K562 (cell line): ENCODE measurements at regions of chr17 and their contacts with region 1.

Region 1: DNA sequence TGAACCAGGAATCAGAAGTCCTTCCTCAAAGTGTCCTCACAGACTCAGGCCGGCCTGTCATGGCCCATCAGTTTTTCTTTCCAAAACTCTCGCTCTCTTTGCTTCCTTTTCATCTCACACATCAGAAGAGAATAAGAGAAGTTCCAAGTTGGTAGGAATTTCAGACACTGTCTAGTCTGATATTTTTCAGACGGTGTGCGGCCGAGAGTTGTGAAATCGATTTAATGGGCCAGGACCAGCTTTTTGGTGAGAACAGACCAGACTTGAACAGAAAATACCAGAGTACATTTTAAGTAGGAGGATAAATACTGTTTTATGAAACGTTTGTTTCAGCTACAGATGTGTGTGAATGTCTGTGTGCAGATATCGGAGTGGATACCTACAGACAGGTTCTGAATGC is 24.8 kb upstream of the RCVRN start:
- DNase-seq: no peak
- ATAC-seq: no peak
- H3K4me3 ChIP-seq: no peak overlapping the region
- H3K27ac ChIP-seq: no peak overlapping the region
- H3K4me1 ChIP-seq: no peaks in the 10 kb centered on the region
- H3K27me3 ChIP-seq: peaks cover 0 to 6% of the 10 kb centered on the region in 2 experiments; a peak in 3 of 5 replicates
- CTCF ChIP-seq: no peak
- EP300 ChIP-seq: no peak
- POLR2A ChIP-seq: no peak
- RAD21 ChIP-seq: no peak

Region 2: DNA sequence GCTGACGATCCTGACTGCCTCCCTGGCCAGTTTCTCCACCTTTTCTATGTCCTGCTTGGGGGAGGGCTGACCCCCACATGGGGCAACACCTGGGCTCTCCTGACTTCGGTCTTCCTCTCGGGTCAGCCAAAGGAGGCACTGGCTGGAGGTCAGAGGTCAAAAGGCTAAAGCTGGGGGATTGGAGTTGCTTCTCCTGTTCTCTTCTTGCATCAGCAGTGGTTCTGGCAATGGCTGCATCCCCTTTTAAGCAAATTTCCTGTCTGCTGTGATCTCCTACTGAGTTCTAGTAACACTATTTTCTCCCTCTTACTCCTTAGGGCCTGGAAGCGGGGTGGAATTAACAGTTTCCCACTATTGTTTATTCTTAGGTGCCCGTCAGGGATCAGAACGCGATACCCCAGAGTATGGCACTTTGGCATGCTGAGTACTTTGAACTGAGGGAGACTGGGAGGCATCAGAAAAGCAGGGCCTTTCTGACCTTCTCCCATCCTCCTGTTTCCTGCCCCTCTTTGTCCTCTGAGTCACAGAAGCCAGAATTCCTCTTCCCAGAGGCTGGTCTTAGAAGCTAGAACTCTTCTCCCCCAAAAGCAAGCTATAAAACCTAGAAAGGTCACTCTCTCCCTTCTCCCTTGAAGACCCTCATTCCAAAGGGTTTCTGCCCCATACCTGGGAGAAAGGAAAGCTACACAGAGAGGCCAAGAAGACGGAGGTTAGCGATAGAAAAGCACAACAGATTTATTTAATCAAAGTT is 622.4 kb before region 1 on chr17:
- CTCF ChIA-PET with region 1: no interaction called
- POLR2A ChIA-PET with region 1: no interaction called
- in situ Hi-C with region 1: no loop called
- intact Hi-C with region 1: no loop called
- DNase-seq: no peak
- ATAC-seq: no peak
- H3K4me3 ChIP-seq: no peak overlapping the region
- H3K27ac ChIP-seq: no peak overlapping the region
- H3K4me1 ChIP-seq: no peaks in the 10 kb centered on the region
- H3K27me3 ChIP-seq: no peaks in the 10 kb centered on the region
- CTCF ChIP-seq: no peak
- EP300 ChIP-seq: no peak
- POLR2A ChIP-seq: no peak
- RAD21 ChIP-seq: no peak

Region 3: DNA sequence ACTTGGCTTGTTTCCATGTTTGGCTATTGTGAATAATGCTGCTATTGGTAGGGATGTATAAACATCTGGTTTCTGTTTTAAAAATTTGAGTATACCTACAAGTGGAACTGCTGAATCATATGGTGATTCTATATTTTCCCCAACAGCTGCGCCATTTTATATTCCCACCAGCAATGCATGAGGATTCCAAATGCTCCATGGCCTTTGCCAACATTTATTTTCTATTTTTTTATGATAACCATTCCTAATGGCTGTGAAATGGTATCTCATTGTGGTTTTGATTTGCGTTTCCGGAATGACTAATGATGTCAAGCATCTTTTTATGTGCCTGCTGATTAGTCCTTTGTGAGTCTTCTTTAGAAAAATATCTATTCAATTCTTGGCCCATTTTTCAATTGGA is 36.3 kb before region 1 on chr17:
- CTCF ChIA-PET with region 1: no interaction called
- POLR2A ChIA-PET with region 1: interaction called, 3 read pairs
- in situ Hi-C with region 1: no loop called
- intact Hi-C with region 1: loop called (anchors 1 kb)
- DNase-seq: no peak
- ATAC-seq: no peak
- H3K4me3 ChIP-seq: no peak overlapping the region
- H3K27ac ChIP-seq: no peak overlapping the region
- H3K4me1 ChIP-seq: no peaks in the 10 kb centered on the region
- H3K27me3 ChIP-seq: peaks cover 0 to under 1% of the 10 kb centered on the region in 2 experiments; a peak in 1 of 5 replicates
- CTCF ChIP-seq: no peak
- EP300 ChIP-seq: no peak
- POLR2A ChIP-seq: no peak
- RAD21 ChIP-seq: no peak